ENCODE measurements at regions of chr1 and their contacts with region 1.

Region 1: DNA sequence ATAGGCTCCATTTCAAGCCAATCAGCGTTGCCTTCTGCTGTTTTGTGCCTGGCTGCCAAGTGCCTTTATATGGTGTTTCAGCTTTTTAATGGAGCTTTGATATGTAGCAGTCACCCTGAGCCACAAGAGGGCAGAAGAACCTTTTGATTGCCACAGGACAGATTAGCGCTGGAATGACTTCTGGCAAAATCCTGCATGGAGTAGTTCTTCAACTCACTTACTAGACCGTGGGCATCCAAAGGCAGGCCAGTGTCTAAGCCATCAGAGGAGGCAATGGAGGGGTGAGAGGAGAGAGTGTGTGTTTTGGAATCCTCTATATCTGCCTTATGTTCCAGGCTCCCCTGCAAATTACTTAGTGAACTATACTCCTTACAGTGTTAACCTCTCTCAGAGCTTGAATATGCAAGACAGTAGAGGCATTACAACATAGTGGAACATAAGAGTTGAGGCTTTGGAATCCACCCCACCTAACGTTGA is 56.2 kb downstream of the ST3GAL3 start:
- DNase-seq: peak; percentile 64
- ATAC-seq: peak; percentile 78
- H3K4me3 Mint-ChIP-seq: no peak overlapping the region
- H3K27ac Mint-ChIP-seq: no peak overlapping the region
- H3K4me1 Mint-ChIP-seq: no peaks in the 10 kb centered on the region
- H3K27me3 Mint-ChIP-seq: no peaks in the 10 kb centered on the region

Region 2: DNA sequence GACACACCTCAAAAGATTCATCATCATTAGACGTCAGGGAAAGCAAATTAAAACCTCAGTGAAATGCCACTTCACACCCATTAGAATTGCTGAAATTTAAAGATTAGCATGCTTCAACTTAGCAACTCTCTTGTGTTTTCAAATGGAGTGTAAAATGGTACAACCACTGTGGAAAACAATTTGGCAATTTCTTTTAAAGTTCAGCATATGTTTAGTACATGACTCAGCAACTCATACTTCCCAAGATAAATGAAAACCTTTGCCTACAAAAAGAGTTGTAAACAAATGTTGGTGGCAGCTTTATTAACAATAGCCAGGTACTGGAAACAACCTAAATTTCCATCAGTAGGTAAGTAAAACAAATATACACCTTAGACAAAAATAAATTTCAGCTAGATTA is 13.5 kb before region 1 on chr1:
- CTCF ChIA-PET with region 1: interaction called, 13 read pairs
- POLR2A ChIA-PET with region 1: no interaction called
- DNase-seq: no peak
- ATAC-seq: no peak
- H3K4me3 Mint-ChIP-seq: no peak overlapping the region
- H3K27ac Mint-ChIP-seq: no peak overlapping the region
- H3K4me1 Mint-ChIP-seq: no peaks in the 10 kb centered on the region
- H3K27me3 Mint-ChIP-seq: no peaks in the 10 kb centered on the region

Region 3: DNA sequence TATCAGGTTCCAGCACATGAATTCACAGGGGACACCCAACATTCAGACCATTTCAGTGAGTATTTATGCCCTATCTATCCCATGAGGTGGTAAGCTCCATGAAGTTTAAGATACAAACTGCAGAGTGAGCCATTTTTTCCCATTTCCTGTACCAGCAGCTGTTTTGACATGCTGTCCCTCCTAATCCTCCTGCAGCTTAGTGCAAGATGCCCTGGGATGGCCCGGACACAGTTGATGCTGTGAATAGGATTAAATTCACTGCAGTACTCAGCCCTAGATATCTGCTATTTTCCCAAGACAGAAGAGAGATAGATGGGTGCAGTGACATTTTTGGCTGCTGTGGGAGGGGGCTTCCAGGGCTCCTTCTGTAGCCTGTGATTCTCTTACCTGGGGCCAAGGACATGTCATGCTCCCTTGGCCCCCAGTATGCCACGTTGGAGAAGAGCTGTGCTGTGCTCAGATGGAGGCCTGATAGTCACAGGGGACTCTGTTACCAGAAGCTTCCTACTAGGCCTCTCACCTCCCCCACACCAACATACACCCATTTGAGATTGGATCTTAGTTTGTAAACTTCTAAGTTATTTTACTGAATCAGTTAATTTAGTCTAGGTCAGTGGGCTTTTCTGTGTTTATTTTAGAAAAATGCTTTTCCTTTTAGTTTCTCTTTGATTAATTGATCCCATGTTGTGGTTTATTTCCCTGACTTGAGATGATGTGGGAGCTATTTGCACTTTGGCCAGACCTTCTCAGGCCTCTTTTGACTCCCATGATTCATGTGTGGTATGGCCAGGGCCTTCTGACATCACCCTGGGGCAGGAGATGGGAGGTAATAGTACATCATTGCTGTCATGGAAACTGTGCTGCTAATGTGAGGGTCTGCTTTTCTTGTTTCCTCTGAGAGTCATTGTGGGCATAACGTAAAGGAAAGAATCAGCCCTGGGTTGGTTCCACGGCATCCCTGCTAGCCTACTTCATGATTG is 36.4 kb after region 1 on chr1:
- CTCF ChIA-PET with region 1: interaction called, 13 read pairs
- POLR2A ChIA-PET with region 1: no interaction called
- DNase-seq: no peak
- ATAC-seq: no peak
- H3K4me3 Mint-ChIP-seq: no peak overlapping the region
- H3K27ac Mint-ChIP-seq: no peak overlapping the region
- H3K4me1 Mint-ChIP-seq: peaks cover 23% of the 10 kb centered on the region
- H3K27me3 Mint-ChIP-seq: no peaks in the 10 kb centered on the region

Region 4: GRCh38 chr1:43858328-43858731 is 94.8 kb after region 1 on chr1:
- CTCF ChIA-PET with region 1: interaction called, 12 read pairs
- POLR2A ChIA-PET with region 1: no interaction called
- DNase-seq: no peak
- ATAC-seq: no peak
- H3K4me3 Mint-ChIP-seq: no peak overlapping the region
- H3K27ac Mint-ChIP-seq: no peak overlapping the region
- H3K4me1 Mint-ChIP-seq: peaks cover 12% of the 10 kb centered on the region
- H3K27me3 Mint-ChIP-seq: no peaks in the 10 kb centered on the region

Region 5: GRCh38 chr1:43946236-43947060 is 182.9 kb after region 1 on chr1 and contains the start of gene IPO13:
- CTCF ChIA-PET with region 1: interaction called, 57 read pairs
- POLR2A ChIA-PET with region 1: interaction called, 5 read pairs
- DNase-seq: peak; percentile 97
- ATAC-seq: peak; percentile 97
- H3K4me3 Mint-ChIP-seq: peak within 1 kb of the TSS; percentile 82
- H3K27ac Mint-ChIP-seq: peak within 1 kb of the TSS; percentile 94
- H3K4me1 Mint-ChIP-seq: peaks cover 34% of the 10 kb centered on the region
- H3K27me3 Mint-ChIP-seq: no peaks in the 10 kb centered on the region
- total RNA-seq, gene IPO13: 23.7 to 24.5 TPM